ENCODE measurements at regions of chr20 and their contacts with region 1.

Region 1: DNA sequence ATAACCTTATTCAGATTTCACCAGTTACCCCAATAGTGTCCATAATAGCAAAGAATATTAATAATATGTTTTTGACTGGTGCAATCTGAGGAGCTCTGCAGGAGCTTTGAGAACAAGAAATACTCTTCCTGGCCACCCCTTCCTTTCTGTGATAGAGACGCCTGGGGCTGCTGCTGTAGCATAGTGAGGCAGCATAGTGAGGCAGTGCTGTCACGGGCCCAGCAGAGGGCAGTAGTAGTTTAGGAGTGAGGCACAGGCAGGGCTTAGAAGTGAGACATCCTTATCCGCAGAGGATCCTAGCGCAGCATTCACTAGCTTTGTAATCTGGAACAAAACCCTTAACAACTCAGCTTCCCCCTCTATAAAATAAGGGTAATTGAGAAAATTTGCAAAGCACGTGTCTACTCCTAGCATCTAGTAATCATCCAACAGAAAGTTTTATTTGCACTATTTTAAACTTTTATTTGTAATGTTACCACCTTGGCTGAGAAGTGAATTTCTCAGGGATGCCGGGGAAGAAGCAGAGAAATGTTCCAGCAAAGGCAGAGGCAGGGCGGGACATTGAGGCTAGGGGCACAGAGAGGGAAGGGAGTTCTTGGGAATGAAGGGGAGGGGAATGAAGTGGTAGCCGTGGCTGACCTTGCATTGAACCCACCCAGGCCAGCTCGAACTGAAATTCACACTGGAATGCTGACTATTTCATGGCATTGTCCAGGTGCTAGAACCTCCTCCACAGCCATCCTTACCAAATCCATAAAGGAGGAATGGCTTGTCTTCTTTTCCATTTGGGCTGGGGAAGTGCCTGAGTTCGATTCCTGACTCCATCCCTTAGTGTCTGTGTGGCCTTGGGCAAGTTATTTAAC is 78.8 kb downstream of the CDS2 start:
- DNase-seq: peak; percentile 33 to 66 (median 60)
- ATAC-seq: peak; percentile 99
- H3K4me3 ChIP-seq: no peak overlapping the region
- H3K4me3 Mint-ChIP-seq: no peak overlapping the region
- H3K27ac ChIP-seq: no peak overlapping the region
- H3K27ac Mint-ChIP-seq: peak overlapping the region in 2 of 9 donors; percentile 21 to 52
- H3K4me1 ChIP-seq: no peaks in the 10 kb centered on the region
- H3K4me1 Mint-ChIP-seq: peaks cover 0 to 8% (median 6%) of the 10 kb centered on the region in 7 donors
- H3K27me3 ChIP-seq: no peaks in the 10 kb centered on the region
- H3K27me3 Mint-ChIP-seq: no peaks in the 10 kb centered on the region

Region 2: DNA sequence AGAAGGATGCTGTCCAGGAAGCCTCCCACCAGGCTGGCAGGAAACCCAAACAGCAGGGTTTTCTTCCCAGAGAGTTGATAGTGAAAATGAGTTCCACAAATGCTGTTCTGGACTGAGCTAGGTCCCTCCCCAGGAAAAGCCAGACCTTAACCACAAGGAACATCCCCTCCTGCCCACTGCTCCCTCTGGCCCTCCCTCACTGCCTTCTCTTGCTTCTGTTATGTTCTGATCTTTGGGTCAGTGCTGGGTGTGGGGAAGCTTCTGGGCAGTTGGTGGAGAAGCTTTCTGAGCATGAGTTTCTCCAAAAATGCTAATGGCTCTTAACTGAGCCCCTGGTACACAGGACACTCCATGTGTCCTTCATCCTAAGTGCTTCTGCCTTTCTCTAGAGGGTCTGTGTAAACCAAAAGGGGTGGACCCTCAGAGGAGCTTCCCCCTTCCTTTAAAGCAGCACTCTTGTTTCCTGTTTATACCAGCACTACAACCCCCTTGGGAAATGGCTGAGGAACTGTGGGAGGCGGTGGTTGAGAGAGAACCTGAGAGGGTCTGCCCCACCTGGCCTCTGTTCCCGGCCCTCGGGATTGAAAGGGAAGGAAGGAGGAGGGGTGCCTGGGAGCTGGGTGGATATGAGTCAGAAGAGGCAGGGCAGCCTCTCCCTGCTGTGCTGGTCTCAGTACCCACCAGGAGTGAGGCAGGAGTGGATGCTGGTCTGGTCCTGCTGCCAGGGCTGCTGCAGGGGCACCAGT is 36.8 kb before region 1 on chr20:
- CTCF ChIA-PET with region 1: no interaction called
- POLR2A ChIA-PET with region 1: no interaction called
- intact Hi-C with region 1: no loop called
- DNase-seq: no peak
- ATAC-seq: peak; percentile 37
- H3K4me3 ChIP-seq: no peak overlapping the region
- H3K4me3 Mint-ChIP-seq: peak overlapping the region; percentile 11 to 77 (median 53)
- H3K27ac ChIP-seq: peak overlapping the region; percentile 37
- H3K27ac Mint-ChIP-seq: peak overlapping the region; percentile 77 to 93 (median 90)
- H3K4me1 ChIP-seq: peaks cover 0 to 21% of the 10 kb centered on the region in 2 donors
- H3K4me1 Mint-ChIP-seq: peaks cover 59 to 93% (median 74%) of the 10 kb centered on the region in 7 donors
- H3K27me3 ChIP-seq: no peaks in the 10 kb centered on the region
- H3K27me3 Mint-ChIP-seq: no peaks in the 10 kb centered on the region

Region 3: GRCh38 chr20:5222919-5223634 is 17.5 kb after region 1 on chr20:
- CTCF ChIA-PET with region 1: interaction called, 17 read pairs
- POLR2A ChIA-PET with region 1: no interaction called
- intact Hi-C with region 1: loop called (anchors 1 to 2 kb)
- DNase-seq: peak in 8 of 9 donors; percentile 4 to 50 (median 40)
- ATAC-seq: peak; percentile 61
- H3K4me3 ChIP-seq: no peak overlapping the region
- H3K4me3 Mint-ChIP-seq: no peak overlapping the region
- H3K27ac ChIP-seq: no peak overlapping the region
- H3K27ac Mint-ChIP-seq: no peak overlapping the region
- H3K4me1 ChIP-seq: no peaks in the 10 kb centered on the region
- H3K4me1 Mint-ChIP-seq: peaks cover 0 to 7% (median 0%) of the 10 kb centered on the region in 7 donors
- H3K27me3 ChIP-seq: no peaks in the 10 kb centered on the region
- H3K27me3 Mint-ChIP-seq: peaks cover 0 to 7% (median 4%) of the 10 kb centered on the region in 5 donors

Region 4: GRCh38 chr20:5448449-5449118 is 243.0 kb after region 1 on chr20:
- CTCF ChIA-PET with region 1: interaction called, 6 read pairs
- POLR2A ChIA-PET with region 1: no interaction called
- intact Hi-C with region 1: loop called in 1 of 2 experiments (anchors 1 kb)
- DNase-seq: peak in 6 of 9 donors; percentile 2 to 42 (median 28)
- ATAC-seq: no peak
- H3K4me3 ChIP-seq: no peak overlapping the region
- H3K4me3 Mint-ChIP-seq: no peak overlapping the region
- H3K27ac ChIP-seq: no peak overlapping the region
- H3K27ac Mint-ChIP-seq: no peak overlapping the region
- H3K4me1 ChIP-seq: no peaks in the 10 kb centered on the region
- H3K4me1 Mint-ChIP-seq: peaks cover 0 to 3% (median 0%) of the 10 kb centered on the region in 7 donors
- H3K27me3 ChIP-seq: no peaks in the 10 kb centered on the region
- H3K27me3 Mint-ChIP-seq: peaks cover 15 to 44% (median 24%) of the 10 kb centered on the region in 5 donors

Measured in naive thymus-derived CD4-positive, alpha-beta T cell (primary cell).